Caco-2 (cell line): ENCODE measurements at regions of chr6 and their contacts with region 1.

Region 1: GRCh38 chr6:43436577-43437282 is 9.4 kb downstream of the ABCC10 start:
- DNase-seq: peak; percentile 61 to 78
- H3K4me3 ChIP-seq: no peak overlapping the region
- H3K4me3 Mint-ChIP-seq: peak overlapping the region; percentile 54
- H3K27ac Mint-ChIP-seq: peak overlapping the region; percentile 59
- H3K4me1 ChIP-seq: peaks cover 17% of the 10 kb centered on the region
- H3K4me1 Mint-ChIP-seq: peaks cover 15% of the 10 kb centered on the region
- H3K27me3 ChIP-seq: no peaks in the 10 kb centered on the region
- H3K27me3 Mint-ChIP-seq: no peaks in the 10 kb centered on the region
- CTCF ChIP-seq: no peak

Region 2: DNA sequence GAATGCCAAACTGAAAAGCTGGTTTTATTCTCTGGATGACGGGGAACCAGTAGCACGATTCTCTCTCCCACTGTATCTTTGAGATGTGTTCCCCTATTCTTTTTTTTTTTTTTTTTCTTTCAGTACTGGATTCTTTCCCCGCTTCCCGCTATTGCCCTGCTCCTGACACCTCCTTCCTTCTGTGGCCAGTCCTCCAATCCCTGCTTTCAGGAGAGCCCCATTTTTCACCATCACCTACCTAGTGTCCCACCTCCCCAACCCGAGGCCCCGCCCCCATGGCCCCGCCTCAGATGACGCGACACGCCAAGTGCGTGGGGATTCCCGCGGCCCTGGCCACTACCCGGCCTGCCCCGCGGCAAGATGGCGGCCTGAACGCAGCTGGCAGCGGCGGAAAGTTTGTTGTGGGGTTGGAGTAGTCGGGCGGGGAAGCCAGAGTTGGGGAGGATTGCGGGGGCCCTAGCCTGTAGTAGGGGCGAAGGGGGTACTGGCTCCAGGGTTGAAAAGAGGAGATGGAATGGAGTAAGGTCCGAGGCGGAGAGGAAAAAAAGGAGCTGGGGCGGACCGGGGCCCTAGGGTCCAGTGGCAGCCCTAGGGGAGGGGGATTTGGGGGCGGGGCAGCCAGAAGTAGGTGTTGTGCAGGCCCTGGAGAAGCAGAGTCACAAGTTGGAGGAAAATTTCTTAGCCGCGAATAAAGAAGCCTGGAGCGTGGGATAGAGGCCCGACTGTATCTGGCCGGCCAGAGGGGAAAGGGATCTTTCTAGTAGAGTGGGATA is 40.7 kb after region 1 on chr6 and contains the start of gene TJAP1:
- CTCF ChIA-PET with region 1: no interaction called
- POLR2A ChIA-PET with region 1: no interaction called
- intact Hi-C with region 1: loop called (anchors 1 kb)
- DNase-seq: peak; percentile 93 to 96
- H3K4me3 ChIP-seq: peak within 1 kb of the TSS; percentile 68
- H3K4me3 Mint-ChIP-seq: peak within 1 kb of the TSS; percentile 97
- H3K27ac Mint-ChIP-seq: peak within 1 kb of the TSS; percentile 97
- H3K4me1 ChIP-seq: peaks cover 17% of the 10 kb centered on the region; the same call in 1 of the 2 replicates
- H3K4me1 Mint-ChIP-seq: peaks cover 25% of the 10 kb centered on the region
- H3K27me3 ChIP-seq: no peaks in the 10 kb centered on the region
- H3K27me3 Mint-ChIP-seq: no peaks in the 10 kb centered on the region
- CTCF ChIP-seq: no peak
- total RNA-seq, gene TJAP1: 34.0 and 39.4 TPM in 2 replicates